ENCODE measurements at regions of chr4 and their contacts with region 1.

Region 1: GRCh38 chr4:931960-932712 is at the starts of genes GAK and TMEM175:
- DNase-seq: peak; percentile 98
- H3K4me3 ChIP-seq: peak within 1 kb of the TSS; percentile 88 to 100 (median 98)
- H3K27ac ChIP-seq: peak within 1 kb of the TSS; percentile 89 to 95 (median 94)
- H3K4me1 ChIP-seq: peaks cover 0 to 48% (median 37%) of the 10 kb centered on the region in 4 donors
- H3K27me3 ChIP-seq: no peaks in the 10 kb centered on the region
- CTCF ChIP-seq: no peak
- EP300 ChIP-seq: no peak
- POLR2A ChIP-seq: peak; percentile 58 to 66
- total RNA-seq, gene GAK: 40.8 to 494 (median 60.4) TPM
- total RNA-seq, gene TMEM175: 19.3 to 42.6 (median 32.6) TPM

Region 2: DNA sequence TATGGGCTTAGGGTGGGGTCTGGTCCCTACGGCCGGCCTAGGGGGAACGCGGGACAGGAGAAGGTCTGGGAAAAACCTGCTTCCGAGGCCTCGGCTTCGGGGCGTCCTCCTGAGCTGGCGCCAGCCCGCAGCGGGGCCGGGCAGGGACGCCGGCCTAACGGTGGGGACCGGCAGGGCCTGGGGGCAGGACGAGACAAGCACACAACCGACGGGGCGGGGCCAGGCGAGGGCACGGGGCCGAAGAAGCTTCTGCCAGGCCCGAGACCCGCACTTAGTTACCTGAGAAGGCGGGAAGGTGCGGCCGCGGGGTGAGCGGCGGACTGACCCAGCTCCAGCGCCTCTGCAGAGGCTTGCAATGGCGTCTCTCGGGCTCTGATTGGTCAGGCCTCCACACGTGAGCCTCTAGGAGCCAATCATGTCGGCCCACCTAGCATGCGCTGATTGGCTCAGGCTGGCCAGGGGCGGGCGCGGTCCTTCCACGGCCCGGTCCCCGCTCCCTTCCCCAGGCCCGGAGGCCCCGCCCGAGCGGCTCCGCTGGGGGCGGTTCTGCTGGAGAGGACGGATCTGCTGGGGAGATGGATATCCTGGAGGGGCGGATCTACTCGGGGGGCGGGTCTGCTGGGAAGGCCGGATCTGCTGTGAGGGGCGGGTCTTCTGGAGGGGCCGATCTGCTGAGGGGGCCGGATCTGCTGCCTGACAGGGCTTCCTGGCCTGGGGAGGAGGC is 150.5 kb before region 1 on chr4:
- intact Hi-C with region 1: loop called (anchors 2 kb)
- DNase-seq: peak; percentile 99
- H3K4me3 ChIP-seq: peak overlapping the region; percentile 74 to 98 (median 92)
- H3K27ac ChIP-seq: peak overlapping the region; percentile 89 to 96 (median 94)
- H3K4me1 ChIP-seq: peaks cover 0 to 69% (median 49%) of the 10 kb centered on the region in 4 donors
- H3K27me3 ChIP-seq: peaks cover 19 to 25% (median 23%) of the 10 kb centered on the region in 3 donors
- CTCF ChIP-seq: no peak
- EP300 ChIP-seq: no peak
- POLR2A ChIP-seq: peak; percentile 91 to 96

Region 3: DNA sequence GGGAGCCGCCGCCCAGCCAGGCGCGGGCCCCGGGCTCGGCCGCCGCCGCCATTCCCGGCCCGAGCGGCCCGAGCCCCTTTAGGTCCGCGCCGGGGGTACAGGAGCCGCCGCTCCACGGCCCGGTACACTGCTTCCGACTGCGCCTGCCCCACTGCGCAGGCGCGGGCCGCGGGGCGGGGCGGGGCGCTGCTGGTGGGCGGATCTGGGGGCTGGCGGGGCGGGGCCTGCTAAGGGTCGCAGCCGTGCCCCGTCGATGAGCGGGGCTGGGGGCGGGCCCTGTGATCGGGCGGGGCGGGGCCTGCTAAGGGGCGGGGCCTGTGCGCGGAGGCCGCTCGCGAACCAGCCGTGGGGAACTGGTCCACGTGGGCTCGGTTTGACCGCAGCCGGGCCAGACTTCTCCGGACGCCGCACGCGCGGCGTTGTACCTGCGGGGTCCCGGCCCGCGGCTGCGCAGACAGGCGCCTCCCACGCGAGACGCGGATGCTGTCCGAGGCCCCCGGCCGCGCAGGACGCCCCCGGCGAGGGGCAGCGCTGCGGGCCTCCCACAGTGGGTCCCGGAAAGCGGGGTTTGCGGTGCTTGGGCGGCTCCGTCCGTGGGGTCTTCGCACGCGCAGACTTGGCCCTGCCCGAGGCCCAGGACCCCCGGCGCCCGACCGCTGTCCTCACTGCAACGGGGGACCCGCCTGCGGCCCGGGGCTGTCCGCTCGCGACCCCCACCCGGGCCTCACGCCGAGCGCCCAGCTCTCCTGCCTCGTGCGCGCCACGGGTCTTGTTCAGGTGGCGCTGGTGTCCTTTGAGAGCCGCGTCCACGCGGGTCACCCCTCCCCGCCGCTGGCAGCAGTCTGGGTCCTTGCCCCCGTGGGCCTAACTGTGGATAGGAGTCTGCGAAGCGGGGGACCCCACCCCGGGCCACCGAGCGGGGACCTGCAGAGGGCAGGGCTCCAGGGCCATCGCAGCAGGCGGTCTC is 41.6 kb after region 1 on chr4 and contains the start of gene DGKQ:
- intact Hi-C with region 1: loop called (anchors 2 kb)
- DNase-seq: peak; percentile 94
- H3K4me3 ChIP-seq: peak within 1 kb of the TSS; percentile 58 to 87 (median 82)
- H3K27ac ChIP-seq: peak within 1 kb of the TSS; percentile 8 to 57 (median 44)
- H3K4me1 ChIP-seq: peaks cover 0 to 28% (median 25%) of the 10 kb centered on the region in 4 donors
- H3K27me3 ChIP-seq: peaks cover 0 to 4% (median under 1%) of the 10 kb centered on the region in 3 donors
- CTCF ChIP-seq: no peak
- EP300 ChIP-seq: no peak
- POLR2A ChIP-seq: no peak
- total RNA-seq, gene DGKQ: 3.5 to 8.9 (median 5.1) TPM

Region 4: DNA sequence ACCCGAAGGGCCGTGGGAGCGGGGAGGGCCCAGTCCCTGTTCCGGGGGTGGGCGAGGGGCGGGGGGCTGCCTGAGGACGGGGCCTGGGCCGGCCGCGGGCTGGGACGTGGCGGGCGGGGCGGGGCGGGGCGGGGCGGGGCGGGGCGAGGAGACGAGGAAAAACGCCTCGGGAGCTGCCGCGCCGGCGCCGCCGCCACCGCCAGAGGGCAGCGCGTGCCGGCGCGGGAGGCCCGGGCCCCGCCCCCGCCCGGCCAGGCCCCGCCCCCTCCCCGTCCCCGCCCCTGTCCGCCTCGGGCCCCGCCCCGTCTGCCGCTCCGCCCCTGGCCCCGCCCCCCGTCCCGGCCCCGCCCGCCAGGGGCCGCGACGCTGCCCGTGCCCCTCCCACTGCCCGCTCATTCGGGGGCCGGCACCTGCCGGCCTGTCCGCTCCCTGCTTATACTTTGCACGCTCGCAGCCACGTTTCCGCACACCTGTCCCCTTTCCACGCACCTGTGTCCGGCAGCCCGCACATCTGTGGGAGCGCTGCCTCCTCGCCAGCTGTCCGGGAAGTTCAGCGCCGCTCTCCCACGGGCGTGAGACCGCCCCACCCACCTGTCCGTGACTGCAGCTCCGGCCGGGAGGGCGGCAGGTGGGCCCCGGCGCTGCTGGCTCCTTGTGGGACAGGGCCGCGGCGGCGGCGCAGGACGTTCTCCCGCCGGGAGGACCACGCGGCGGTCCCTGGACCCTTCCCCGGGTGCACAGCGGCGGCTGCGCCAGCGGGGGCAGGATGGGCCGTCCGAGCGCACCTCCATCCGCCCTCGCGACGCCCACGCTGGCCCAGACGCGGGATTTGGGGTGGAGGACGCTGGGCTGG is 77.6 kb after region 1 on chr4:
- intact Hi-C with region 1: loop called (anchors 5 kb)
- DNase-seq: peak; percentile 86
- H3K4me3 ChIP-seq: peak overlapping the region; percentile 58 to 74 (median 68)
- H3K27ac ChIP-seq: peak overlapping the region; percentile 69 to 86 (median 72)
- H3K4me1 ChIP-seq: peaks cover 0 to 34% (median 32%) of the 10 kb centered on the region in 4 donors
- H3K27me3 ChIP-seq: peaks cover 8 to 42% (median 32%) of the 10 kb centered on the region in 3 donors
- CTCF ChIP-seq: peak in 1 of 4 experiments; percentile 4
- EP300 ChIP-seq: no peak
- POLR2A ChIP-seq: no peak

Region 5: GRCh38 chr4:1167247-1167949 is 235.3 kb after region 1 on chr4:
- intact Hi-C with region 1: no loop called
- DNase-seq: peak; percentile 92
- H3K4me3 ChIP-seq: peak overlapping the region; percentile 39 to 66 (median 59)
- H3K27ac ChIP-seq: peak overlapping the region; percentile 45 to 71 (median 66)
- H3K4me1 ChIP-seq: peaks cover 2 to 50% (median 35%) of the 10 kb centered on the region in 4 donors
- H3K27me3 ChIP-seq: peaks cover 20 to 27% (median 25%) of the 10 kb centered on the region in 3 donors
- CTCF ChIP-seq: peak; percentile 87 to 94 (median 92)
- EP300 ChIP-seq: no peak
- POLR2A ChIP-seq: no peak

Measured in sigmoid colon (tissue), 7 donors.